ENCODE measurements at regions of chr19 and their contacts with region 1.

Region 1: DNA sequence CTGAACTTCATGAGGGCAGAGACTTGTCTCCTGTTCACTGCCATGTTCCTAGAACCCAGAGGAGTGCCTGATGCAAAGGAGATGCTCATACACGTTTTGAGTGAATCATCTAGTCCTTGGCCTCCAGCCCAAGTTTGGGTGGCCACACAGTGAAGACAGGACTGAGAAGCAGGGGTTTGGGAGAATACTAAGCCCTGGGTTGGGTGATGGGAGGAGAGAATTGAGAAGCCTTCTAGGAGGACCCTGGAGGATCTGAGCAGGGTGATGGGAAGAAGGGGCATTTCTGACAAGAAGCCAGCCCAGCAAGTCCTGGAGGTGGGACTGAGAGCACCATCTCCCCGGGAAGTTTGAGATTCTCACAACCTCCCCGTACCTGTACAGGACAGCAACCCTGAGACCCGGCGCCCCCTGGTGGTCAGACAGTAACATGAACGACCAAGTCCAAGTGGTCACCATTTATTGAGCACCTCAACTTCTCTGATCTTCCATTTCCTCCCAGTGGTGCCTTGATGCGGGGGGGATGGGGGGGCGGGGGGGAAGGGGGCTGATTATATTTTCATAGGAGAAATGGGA is 11.0 kb downstream of the CTU1 start:
- DNase-seq: peak; percentile 20 to 75 (median 44)
- ATAC-seq: peak; percentile 57
- H3K4me3 ChIP-seq: no peak overlapping the region
- H3K4me3 Mint-ChIP-seq: peak overlapping the region in 6 of 10 donors; percentile 2 to 56 (median 30)
- H3K27ac ChIP-seq: peak overlapping the region; percentile 28
- H3K27ac Mint-ChIP-seq: peak overlapping the region in 5 of 9 donors; percentile 23 to 66 (median 36)
- H3K4me1 ChIP-seq: peaks cover 5 to 17% of the 10 kb centered on the region in 2 donors
- H3K4me1 Mint-ChIP-seq: peaks cover 19 to 42% (median 26%) of the 10 kb centered on the region in 7 donors
- H3K27me3 ChIP-seq: no peaks in the 10 kb centered on the region
- H3K27me3 Mint-ChIP-seq: no peaks in the 10 kb centered on the region

Region 2: DNA sequence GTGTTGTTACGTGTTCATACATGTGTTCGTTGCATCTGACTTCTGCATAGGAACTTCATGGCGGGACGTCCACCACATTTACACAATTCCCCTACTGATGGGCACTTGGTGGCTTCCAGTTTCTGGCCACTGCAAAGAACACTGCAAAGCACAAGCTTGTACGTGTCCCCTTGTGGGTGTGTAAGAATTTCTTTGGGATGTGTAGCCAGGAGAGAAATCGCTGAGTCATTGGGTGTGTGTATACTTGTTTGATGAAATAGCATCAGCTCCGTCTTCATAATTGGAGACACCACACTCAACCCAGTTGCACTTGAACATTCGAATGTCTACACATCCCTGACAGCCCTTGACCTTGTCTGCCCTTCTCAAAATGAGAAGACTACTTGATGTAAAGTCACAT is 163.6 kb before region 1 on chr19:
- CTCF ChIA-PET with region 1: no interaction called
- POLR2A ChIA-PET with region 1: no interaction called
- intact Hi-C with region 1: loop called (anchors 1 to 2 kb)
- DNase-seq: no peak
- ATAC-seq: no peak
- H3K4me3 ChIP-seq: no peak overlapping the region
- H3K4me3 Mint-ChIP-seq: no peak overlapping the region
- H3K27ac ChIP-seq: no peak overlapping the region
- H3K27ac Mint-ChIP-seq: no peak overlapping the region
- H3K4me1 ChIP-seq: no peaks in the 10 kb centered on the region
- H3K4me1 Mint-ChIP-seq: peaks cover 0 to 11% (median 5%) of the 10 kb centered on the region in 7 donors
- H3K27me3 ChIP-seq: no peaks in the 10 kb centered on the region
- H3K27me3 Mint-ChIP-seq: peaks cover 16 to 61% (median 43%) of the 10 kb centered on the region in 5 donors

Region 3: DNA sequence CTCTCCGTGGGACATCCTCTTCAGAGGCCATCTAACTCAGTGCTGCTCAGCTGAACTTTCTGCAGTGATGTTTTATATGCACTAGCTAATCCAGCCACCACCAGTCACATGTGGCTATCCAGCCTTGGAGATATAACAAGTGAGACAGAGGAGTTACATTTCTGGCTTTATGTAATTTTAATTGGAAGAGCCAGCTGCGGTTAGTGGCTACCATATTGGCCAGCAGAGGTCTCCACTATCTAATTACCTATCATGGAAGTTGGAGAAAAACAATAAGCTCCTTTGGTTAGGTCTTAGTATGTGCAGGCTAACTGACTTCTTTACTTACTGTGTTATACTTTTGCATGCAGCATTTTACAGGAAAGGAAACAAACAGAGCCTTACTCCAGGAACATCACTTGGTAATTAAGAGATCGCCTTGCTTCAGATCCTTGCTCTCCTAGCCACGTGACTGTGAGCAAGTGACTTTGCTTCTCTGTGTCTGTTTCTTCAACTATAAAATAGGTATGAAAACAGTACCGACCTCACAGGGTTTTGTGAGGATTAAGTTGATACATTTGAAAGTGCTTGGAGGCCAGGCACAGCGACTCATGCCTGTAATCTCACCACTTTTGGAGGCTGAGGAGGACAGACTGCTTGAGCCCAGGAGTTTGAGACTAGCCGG is 76.1 kb before region 1 on chr19:
- CTCF ChIA-PET with region 1: interaction called, 3 read pairs
- POLR2A ChIA-PET with region 1: no interaction called
- intact Hi-C with region 1: loop called in 1 of 2 experiments (anchors 1 kb)
- DNase-seq: peak in 6 of 9 donors; percentile 7 to 25 (median 16)
- ATAC-seq: no peak
- H3K4me3 ChIP-seq: no peak overlapping the region
- H3K4me3 Mint-ChIP-seq: peak overlapping the region in 1 of 10 donors; percentile 41
- H3K27ac ChIP-seq: no peak overlapping the region
- H3K27ac Mint-ChIP-seq: no peak overlapping the region
- H3K4me1 ChIP-seq: no peaks in the 10 kb centered on the region
- H3K4me1 Mint-ChIP-seq: peaks cover 8 to 25% (median 23%) of the 10 kb centered on the region in 7 donors
- H3K27me3 ChIP-seq: no peaks in the 10 kb centered on the region
- H3K27me3 Mint-ChIP-seq: peaks cover 44 to 69% (median 54%) of the 10 kb centered on the region in 5 donors

Region 4: DNA sequence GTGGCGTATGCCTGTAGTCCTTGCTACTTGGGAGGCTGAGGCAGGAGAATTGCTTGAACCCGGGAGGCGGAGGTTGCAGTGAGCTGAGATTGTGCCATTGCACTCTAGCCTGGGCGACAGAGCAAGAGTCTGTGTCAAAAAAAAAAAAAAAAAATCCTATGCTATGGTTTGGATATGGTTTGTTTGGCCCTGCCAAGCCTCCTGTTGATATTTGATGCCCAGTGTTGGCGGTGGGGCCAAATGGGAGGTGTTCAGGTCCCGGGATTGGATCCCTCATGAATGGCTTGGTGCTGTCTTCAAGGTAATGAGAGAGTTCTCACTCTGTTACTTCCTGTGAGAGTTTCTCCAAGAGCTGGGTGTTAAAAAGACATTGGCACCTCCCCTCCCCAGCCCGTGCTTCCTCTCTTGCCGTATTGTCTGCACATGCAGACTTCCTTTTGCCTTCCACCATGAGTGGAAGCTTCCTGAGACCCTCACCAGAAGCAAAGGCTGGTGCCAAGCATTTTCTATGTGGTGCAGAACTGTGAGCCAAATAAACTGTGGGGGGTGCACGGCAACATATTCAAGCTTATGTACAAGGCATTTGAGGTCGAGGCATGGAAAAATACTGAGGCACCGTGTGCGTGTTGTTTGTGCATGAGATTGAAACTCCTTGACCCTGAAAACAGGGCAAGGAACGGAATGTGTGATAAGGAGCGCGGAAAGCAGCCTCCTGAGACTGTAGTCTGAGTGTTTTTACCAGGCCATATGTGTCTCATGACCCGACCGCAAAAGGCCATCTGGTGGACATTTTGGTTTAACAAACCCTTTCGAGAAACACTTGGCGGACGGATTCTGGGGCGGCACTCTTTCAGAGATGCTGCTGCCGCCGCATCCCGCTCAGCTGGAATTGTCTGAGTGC is 34.8 kb after region 1 on chr19:
- CTCF ChIA-PET with region 1: interaction called, 7 read pairs
- POLR2A ChIA-PET with region 1: interaction called, 4 read pairs
- intact Hi-C with region 1: loop called in 1 of 2 experiments (anchors 5 kb)
- DNase-seq: peak in 7 of 9 donors; percentile 28 to 58 (median 50)
- ATAC-seq: peak; percentile 73
- H3K4me3 ChIP-seq: peak overlapping the region; percentile 44
- H3K4me3 Mint-ChIP-seq: peak overlapping the region; percentile 69 to 90 (median 83)
- H3K27ac ChIP-seq: peak overlapping the region; percentile 48
- H3K27ac Mint-ChIP-seq: peak overlapping the region; percentile 82 to 97 (median 93)
- H3K4me1 ChIP-seq: peaks cover 55 to 62% of the 10 kb centered on the region in 2 donors
- H3K4me1 Mint-ChIP-seq: peaks cover 41 to 82% (median 68%) of the 10 kb centered on the region in 7 donors
- H3K27me3 ChIP-seq: no peaks in the 10 kb centered on the region
- H3K27me3 Mint-ChIP-seq: peaks cover 0 to 2% (median 0%) of the 10 kb centered on the region in 5 donors

Region 5: DNA sequence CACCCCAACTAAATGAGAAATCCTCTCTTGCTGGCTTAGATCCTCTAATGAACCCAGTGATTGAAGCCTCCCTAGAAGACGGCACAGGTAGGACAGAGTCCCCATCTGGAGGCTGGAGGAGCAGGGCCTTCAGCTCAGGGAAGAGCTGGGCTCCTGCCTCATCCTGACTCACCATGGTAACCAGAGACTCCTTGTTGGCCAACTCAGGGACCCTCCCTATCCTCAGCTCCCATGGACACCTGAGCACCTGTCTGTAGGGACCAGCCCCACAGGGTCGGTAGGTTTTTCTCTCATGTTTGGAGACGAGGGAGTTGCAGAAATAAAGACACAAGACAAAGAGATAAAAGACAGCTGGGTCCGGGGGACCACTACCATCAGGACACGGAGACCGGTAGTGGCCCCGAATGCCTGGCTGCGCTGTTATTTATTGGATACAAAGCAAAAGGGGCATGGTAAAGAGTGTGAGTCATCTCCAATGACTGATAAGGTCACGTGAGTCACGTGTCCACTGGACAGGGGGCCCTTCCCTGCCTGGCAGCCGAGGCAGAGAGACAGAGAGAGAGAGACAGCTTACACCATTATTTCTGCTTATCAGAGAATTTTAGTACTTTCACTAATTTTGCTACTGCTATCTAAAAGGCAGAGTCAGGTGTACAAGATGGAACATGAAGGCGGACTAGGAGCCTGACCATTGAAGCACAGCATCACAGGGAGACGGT is 71.5 kb after region 1 on chr19:
- CTCF ChIA-PET with region 1: interaction called, 6 read pairs
- POLR2A ChIA-PET with region 1: no interaction called
- intact Hi-C with region 1: loop called in 1 of 2 experiments (anchors 2 kb)
- DNase-seq: no peak
- ATAC-seq: no peak
- H3K4me3 ChIP-seq: no peak overlapping the region
- H3K4me3 Mint-ChIP-seq: peak overlapping the region in 3 of 10 donors; percentile 12 to 77 (median 43)
- H3K27ac ChIP-seq: no peak overlapping the region
- H3K27ac Mint-ChIP-seq: peak overlapping the region in 2 of 9 donors; percentile 57 to 86
- H3K4me1 ChIP-seq: peaks cover 15 to 17% of the 10 kb centered on the region in 2 donors
- H3K4me1 Mint-ChIP-seq: peaks cover 10 to 41% (median 28%) of the 10 kb centered on the region in 7 donors
- H3K27me3 ChIP-seq: no peaks in the 10 kb centered on the region
- H3K27me3 Mint-ChIP-seq: peaks cover 0 to 27% (median 7%) of the 10 kb centered on the region in 5 donors

Region 6: GRCh38 chr19:51703575-51704515 is 606.6 kb after region 1 on chr19:
- CTCF ChIA-PET with region 1: no interaction called
- POLR2A ChIA-PET with region 1: no interaction called
- intact Hi-C with region 1: loop called in 1 of 2 experiments (anchors 5 kb)
- DNase-seq: peak; percentile 95 to 98 (median 97)
- ATAC-seq: peak; percentile 98
- H3K4me3 ChIP-seq: peak overlapping the region; percentile 98
- H3K4me3 Mint-ChIP-seq: peak overlapping the region; percentile 82 to 92 (median 90)
- H3K27ac ChIP-seq: peak overlapping the region; percentile 99
- H3K27ac Mint-ChIP-seq: peak overlapping the region; percentile 87 to 95 (median 91)
- H3K4me1 ChIP-seq: peaks cover 3 to 9% of the 10 kb centered on the region in 2 donors
- H3K4me1 Mint-ChIP-seq: peaks cover 29 to 50% (median 43%) of the 10 kb centered on the region in 7 donors
- H3K27me3 ChIP-seq: no peaks in the 10 kb centered on the region
- H3K27me3 Mint-ChIP-seq: peaks cover 0 to 7% (median 0%) of the 10 kb centered on the region in 5 donors

Region 7: DNA sequence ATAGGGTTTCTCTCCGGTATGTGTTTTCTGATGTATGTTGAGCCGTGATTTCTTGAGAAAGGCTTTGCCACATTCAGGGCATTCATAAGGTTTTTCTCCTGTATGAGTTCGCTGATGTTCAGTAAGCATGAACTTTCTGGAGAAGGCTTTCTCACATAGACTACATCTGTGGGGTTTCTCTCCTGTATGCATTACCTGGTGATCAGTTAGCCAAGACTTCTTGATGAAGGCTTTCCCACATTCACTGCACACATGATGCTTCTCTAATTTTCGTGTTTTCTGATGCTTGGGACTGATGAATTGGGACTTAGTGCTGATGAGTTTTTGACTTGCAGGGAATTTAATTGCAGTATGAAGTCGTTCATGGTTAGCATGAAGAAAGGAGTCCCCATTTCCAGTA is 868.3 kb after region 1 on chr19:
- CTCF ChIA-PET with region 1: no interaction called
- POLR2A ChIA-PET with region 1: no interaction called
- intact Hi-C with region 1: no loop called
- DNase-seq: no peak
- ATAC-seq: no peak
- H3K4me3 ChIP-seq: peak overlapping the region; percentile 9
- H3K4me3 Mint-ChIP-seq: peak overlapping the region in 1 of 10 donors; percentile 9
- H3K27ac ChIP-seq: no peak overlapping the region
- H3K27ac Mint-ChIP-seq: no peak overlapping the region
- H3K4me1 ChIP-seq: no peaks in the 10 kb centered on the region
- H3K4me1 Mint-ChIP-seq: peaks cover 0 to 6% (median 0%) of the 10 kb centered on the region in 7 donors
- H3K27me3 ChIP-seq: no peaks in the 10 kb centered on the region
- H3K27me3 Mint-ChIP-seq: no peaks in the 10 kb centered on the region

Measured in naive thymus-derived CD4-positive, alpha-beta T cell (primary cell).